ENCODE measurements at regions of chr15 and their contacts with region 1.

Region 1: DNA sequence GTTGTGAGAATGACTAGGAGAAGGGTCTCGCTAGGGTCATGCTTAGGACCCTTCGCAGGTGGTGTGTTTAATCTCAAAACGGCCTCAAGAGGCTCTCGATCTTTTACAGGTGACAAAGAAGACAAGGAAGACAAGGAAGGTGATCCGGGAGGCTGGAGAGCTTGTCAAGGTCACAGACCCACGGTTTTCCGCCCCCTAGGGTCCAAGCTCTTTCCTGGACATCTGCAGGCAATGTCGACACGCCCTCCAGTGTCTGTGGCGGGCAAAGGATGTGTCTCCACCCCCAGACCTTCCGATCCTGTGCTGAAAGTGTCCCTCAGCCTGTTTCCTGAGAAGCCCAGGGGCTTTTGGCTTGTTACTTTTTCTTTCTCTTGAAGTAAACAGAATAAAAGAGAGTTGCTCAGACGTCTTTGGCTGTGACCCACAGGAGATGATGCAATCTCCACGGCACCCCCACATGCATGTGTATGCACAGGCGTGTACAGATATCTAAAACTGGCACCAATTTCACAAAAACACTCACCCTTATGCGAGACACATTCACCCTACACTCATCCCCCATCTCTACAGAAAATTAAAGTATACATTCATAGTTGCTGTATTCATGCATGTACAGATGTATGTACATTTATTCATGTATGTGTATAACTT is 108.8 kb downstream of the KLF13 start:
- DNase-seq: peak; percentile 62
- H3K4me3 ChIP-seq: no peak overlapping the region
- H3K27ac ChIP-seq: peak overlapping the region; percentile 5 to 17
- H3K4me1 ChIP-seq: peaks cover 6% of the 10 kb centered on the region
- H3K27me3 ChIP-seq: no peaks in the 10 kb centered on the region
- CTCF ChIP-seq: peak; percentile 12 to 80 (median 62)
- POLR2A ChIP-seq: no peak

Region 2: DNA sequence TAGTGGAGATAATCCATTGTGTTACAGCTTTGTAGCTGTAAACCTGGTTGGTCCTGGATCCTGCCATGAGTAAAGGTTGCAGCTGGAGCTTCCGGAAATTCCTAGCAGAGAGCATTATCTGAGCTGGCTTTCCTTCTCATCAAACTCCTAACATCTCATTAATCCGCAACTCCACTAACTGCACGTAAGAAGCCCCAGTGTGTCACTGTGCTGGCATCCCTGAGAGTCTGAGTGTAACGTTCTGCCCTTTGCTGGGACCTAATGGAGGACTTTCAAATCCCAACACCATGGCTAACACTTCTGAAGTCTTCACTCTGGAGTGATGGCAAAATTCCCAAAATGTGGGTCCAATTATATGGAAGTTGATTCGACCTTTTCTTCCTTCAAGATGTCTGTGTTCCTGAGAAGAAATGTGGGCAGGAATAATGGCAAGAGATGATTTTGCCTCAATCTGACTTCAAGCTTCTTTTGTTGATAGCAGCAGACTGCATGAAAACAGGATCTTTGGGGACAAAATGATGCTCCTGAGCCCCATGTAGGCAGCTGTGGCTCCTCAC is 324.2 kb before region 1 on chr15:
- intact Hi-C with region 1: no loop called
- DNase-seq: no peak
- H3K4me3 ChIP-seq: no peak overlapping the region
- H3K27ac ChIP-seq: no peak overlapping the region
- H3K4me1 ChIP-seq: no peaks in the 10 kb centered on the region
- H3K27me3 ChIP-seq: no peaks in the 10 kb centered on the region
- CTCF ChIP-seq: no peak
- POLR2A ChIP-seq: no peak

Region 3: DNA sequence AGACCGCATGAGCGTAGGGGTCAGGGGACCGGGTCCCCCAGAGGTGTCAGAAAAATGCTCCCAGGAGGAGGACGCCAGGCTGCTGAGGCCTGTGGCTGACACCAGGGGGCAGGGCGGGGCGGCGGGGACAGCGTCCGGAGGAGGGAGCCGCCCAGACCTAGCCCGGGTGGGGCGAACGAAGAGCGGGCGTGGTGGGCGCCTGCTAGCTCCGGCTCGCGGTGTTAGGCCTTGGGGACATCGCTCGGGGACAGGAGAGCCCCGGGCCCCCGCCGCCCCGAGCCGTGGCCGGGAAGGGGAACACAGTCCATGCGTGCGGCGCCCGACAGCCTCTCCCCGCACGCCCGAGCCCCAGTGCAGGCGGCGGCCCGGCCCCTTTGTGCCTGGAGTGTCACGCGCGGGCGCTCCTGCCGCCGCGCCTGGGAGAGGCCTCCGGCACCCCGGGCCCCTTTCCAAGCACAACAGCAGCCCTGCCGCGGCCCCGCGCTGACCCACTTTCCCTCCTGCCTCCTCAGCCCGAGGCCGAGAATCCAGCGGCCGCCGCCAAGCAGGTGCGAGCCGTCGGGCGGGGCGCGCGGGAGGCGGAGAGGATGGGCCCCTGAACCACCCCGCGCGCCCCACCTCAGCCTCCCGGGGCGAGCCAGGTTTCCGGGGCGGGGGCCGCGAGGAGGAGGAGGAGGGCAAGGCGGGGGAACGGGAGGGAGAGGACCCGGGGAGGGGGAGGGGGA is 219.7 kb before region 1 on chr15:
- intact Hi-C with region 1: loop called (anchors 2 kb)
- DNase-seq: peak; percentile 64
- H3K4me3 ChIP-seq: peak overlapping the region; percentile 36 to 48
- H3K27ac ChIP-seq: peak overlapping the region; percentile 87 to 88
- H3K4me1 ChIP-seq: peaks cover 16% of the 10 kb centered on the region
- H3K27me3 ChIP-seq: no peaks in the 10 kb centered on the region
- CTCF ChIP-seq: peak; percentile 78 to 86 (median 83)
- POLR2A ChIP-seq: no peak

Measured in prostate gland (tissue), 2 donors.